HEK293 (cell line): ENCODE measurements at regions of chr6 and their contacts with region 1.

Region 1: GRCh38 chr6:27146706-27147505 is 100.6 kb upstream of the PRSS16 start:
- H3K4me3 ChIP-seq: peak overlapping the region; percentile 55
- H3K27ac ChIP-seq: peak overlapping the region; percentile 81; the same call in 1 of the 2 replicates
- H3K4me1 ChIP-seq: no peaks in the 10 kb centered on the region
- CTCF ChIP-seq: 0 out of 2 replicates have a peak, but pooled peaks have one; percentile 14

Region 2: GRCh38 chr6:27126815-27127537 is 19.9 kb before region 1 on chr6:
- CTCF ChIA-PET with region 1: interaction called, 7 read pairs
- POLR2A ChIA-PET with region 1: interaction called, 338 read pairs
- H3K4me3 ChIP-seq: peak overlapping the region; percentile 8
- H3K27ac ChIP-seq: no peak overlapping the region
- H3K4me1 ChIP-seq: peaks cover 10% of the 10 kb centered on the region
- CTCF ChIP-seq: peak; percentile 91

Region 3: DNA sequence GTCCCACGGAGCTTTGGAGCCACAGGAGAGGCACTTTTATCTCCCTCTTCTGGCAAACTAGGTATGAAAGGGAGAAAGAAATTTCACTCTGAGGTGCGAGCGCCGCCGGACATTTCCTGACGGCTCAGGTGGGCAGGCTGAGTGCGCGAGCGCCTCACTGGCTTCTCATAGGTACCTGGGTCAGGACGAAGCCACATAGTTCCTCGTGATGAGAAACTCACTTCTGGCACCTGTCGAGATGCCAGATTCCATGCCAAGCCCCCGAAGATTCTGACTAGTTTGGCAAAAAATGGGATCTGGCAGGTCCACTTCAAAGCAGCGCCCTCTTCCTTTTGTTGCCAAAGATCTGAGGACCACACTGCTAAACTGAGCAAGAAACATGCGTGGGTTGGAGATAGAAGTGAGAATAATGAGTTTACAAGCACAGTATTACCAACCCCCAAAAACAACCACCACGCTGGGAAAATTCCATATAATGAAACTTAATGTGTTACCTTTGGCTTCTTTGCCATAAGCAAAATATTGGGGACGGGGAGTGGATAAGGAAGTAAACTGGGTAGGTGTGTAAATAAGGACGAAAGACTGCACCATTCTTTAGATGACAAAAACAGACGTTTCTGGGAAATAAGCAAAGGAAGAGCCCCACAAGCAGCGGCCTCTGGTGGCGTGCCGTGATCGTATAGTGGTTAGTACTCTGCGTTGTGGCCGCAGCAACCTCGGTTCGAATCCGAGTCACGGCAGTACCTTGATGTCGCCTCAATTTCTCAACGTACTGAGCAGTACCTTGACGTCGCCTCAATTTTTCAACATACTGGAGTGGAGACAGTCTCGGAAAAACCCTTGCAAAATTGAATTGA is 10.8 kb after region 1 on chr6:
- CTCF ChIA-PET with region 1: interaction called, 4 read pairs
- POLR2A ChIA-PET with region 1: interaction called, 30 read pairs
- H3K4me3 ChIP-seq: peak overlapping the region; percentile 65
- H3K27ac ChIP-seq: no peak overlapping the region; the same call in 1 of the 2 replicates
- H3K4me1 ChIP-seq: no peaks in the 10 kb centered on the region
- CTCF ChIP-seq: peak; percentile 55

Region 4: GRCh38 chr6:27700337-27700736 is 553.4 kb after region 1 on chr6:
- CTCF ChIA-PET with region 1: no interaction called
- POLR2A ChIA-PET with region 1: interaction called, 10 read pairs
- H3K4me3 ChIP-seq: no peak overlapping the region
- H3K27ac ChIP-seq: no peak overlapping the region
- H3K4me1 ChIP-seq: no peaks in the 10 kb centered on the region
- CTCF ChIP-seq: no peak

Region 5: DNA sequence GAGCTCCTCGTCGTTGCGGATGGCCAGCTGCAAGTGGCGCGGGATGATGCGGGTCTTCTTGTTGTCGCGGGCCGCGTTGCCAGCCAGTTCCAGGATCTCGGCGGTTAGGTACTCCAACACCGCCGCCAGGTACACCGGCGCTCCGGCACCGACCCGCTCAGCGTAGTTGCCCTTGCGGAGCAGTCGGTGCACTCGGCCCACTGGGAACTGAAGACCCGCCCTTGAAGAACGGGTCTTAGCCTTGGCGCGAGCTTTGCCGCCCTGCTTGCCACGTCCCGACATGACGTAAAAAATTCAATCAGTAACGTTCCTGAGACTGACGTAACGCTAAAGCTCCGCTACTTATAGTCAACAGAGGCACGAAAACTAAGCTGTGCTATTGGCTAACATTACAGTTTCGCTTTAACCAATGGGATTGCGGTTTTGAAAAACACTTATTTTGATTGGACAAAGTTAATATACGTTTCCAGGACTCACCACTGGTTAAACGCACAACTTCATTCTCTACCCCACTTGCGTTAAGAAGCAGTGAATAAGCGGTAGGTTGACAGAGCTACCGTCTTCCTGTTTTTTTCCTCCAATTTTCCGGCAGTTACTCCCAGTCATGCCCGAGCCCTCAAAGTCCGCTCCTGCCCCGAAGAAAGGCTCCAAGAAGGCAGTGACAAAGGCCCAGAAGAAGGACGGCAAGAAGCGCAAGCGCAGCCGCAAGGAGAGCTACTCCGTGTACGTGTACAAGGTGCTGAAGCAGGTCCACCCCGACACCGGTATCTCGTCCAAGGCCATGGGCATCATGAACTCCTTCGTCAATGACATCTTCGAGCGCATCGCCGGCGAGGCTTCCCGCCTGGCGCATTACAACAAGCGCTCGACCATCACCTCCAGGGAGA is 691.4 kb after region 1 on chr6:
- CTCF ChIA-PET with region 1: no interaction called
- POLR2A ChIA-PET with region 1: interaction called, 16 read pairs
- H3K4me3 ChIP-seq: peak overlapping the region; percentile 65
- H3K27ac ChIP-seq: peak overlapping the region; percentile 90
- H3K4me1 ChIP-seq: no peaks in the 10 kb centered on the region
- CTCF ChIP-seq: no peak; the same call in 1 of the 2 replicates

Region 6: GRCh38 chr6:27871924-27872638 is 725.2 kb after region 1 on chr6:
- CTCF ChIA-PET with region 1: no interaction called
- POLR2A ChIA-PET with region 1: interaction called, 10 read pairs
- H3K4me3 ChIP-seq: peak overlapping the region; percentile 41
- H3K27ac ChIP-seq: 0 out of 2 replicates have a peak overlapping the region, but pooled peaks have one; percentile 13
- H3K4me1 ChIP-seq: no peaks in the 10 kb centered on the region
- CTCF ChIP-seq: no peak

Region 7: GRCh38 chr6:28218271-28219248 is 1071.7 kb after region 1 on chr6:
- CTCF ChIA-PET with region 1: no interaction called
- POLR2A ChIA-PET with region 1: interaction called, 11 read pairs
- H3K4me3 ChIP-seq: peak overlapping the region; percentile 67
- H3K27ac ChIP-seq: peak overlapping the region; percentile 63; the same call in 1 of the 2 replicates
- H3K4me1 ChIP-seq: no peaks in the 10 kb centered on the region; the same call in 1 of the 2 replicates
- CTCF ChIP-seq: no peak